ENCODE measurements at regions of chr4 and their contacts with region 1.

Region 1: GRCh38 chr4:148901075-148901705 is 459.0 kb upstream of the NR3C2 start:
- DNase-seq: no peak
- ATAC-seq: no peak
- H3K4me3 ChIP-seq: no peak overlapping the region
- H3K27ac ChIP-seq: no peak overlapping the region
- H3K4me1 ChIP-seq: no peaks in the 10 kb centered on the region
- H3K27me3 ChIP-seq: no peaks in the 10 kb centered on the region
- CTCF ChIP-seq: no peak
- POLR2A ChIP-seq: no peak

Region 2: GRCh38 chr4:148962539-148963290 is 61.5 kb after region 1 on chr4:
- intact Hi-C with region 1: loop called in 1 of 10 experiments (anchors 5 kb)
- DNase-seq: no peak
- ATAC-seq: no peak
- H3K4me3 ChIP-seq: no peak overlapping the region
- H3K27ac ChIP-seq: no peak overlapping the region
- H3K4me1 ChIP-seq: no peaks in the 10 kb centered on the region
- H3K27me3 ChIP-seq: no peaks in the 10 kb centered on the region
- CTCF ChIP-seq: no peak
- POLR2A ChIP-seq: no peak

Measured in heart left ventricle (tissue), 16 donors.